HepG2 (cell line): ENCODE measurements at regions of chr6 and their contacts with region 1.

Region 1: GRCh38 chr6:30821862-30822782 is 62.2 kb upstream of the DDR1 start:
- DNase-seq: peak; percentile 70
- ATAC-seq: peak; percentile 49
- H3K4me3 ChIP-seq: peak overlapping the region in 2 of 3 experiments; percentile 20 to 35; a peak in 3 of 6 replicates
- H3K27ac ChIP-seq: peak overlapping the region; percentile 79
- H3K4me1 ChIP-seq: peaks cover 71% of the 10 kb centered on the region
- H3K27me3 ChIP-seq: no peaks in the 10 kb centered on the region
- CTCF ChIP-seq: peak; percentile 55
- EP300 ChIP-seq: no peak
- POLR2A ChIP-seq: no peak
- RAD21 ChIP-seq: peak; percentile 30; the same call in 1 of the 2 replicates

Region 2: GRCh38 chr6:30781743-30782424 is 40.2 kb before region 1 on chr6:
- CTCF ChIA-PET with region 1: no interaction called
- POLR2A ChIA-PET with region 1: interaction called, 9 read pairs
- in situ Hi-C with region 1: no loop called
- intact Hi-C with region 1: loop called (anchors 1 kb)
- DNase-seq: peak; percentile 96
- ATAC-seq: peak; percentile 87
- H3K4me3 ChIP-seq: peak overlapping the region; percentile 39 to 49 (median 43); a peak in 5 of 6 replicates
- H3K27ac ChIP-seq: peak overlapping the region; percentile 83
- H3K4me1 ChIP-seq: peaks cover 86% of the 10 kb centered on the region
- H3K27me3 ChIP-seq: no peaks in the 10 kb centered on the region
- CTCF ChIP-seq: 0 out of 2 replicates have a peak, but pooled peaks have one; percentile 12
- EP300 ChIP-seq: peak; percentile 90 to 93
- POLR2A ChIP-seq: peak; percentile 20 to 34; a peak in 2 of 4 replicates
- RAD21 ChIP-seq: peak; percentile 20; the same call in 1 of the 2 replicates